ENCODE measurements at regions of chr19 and their contacts with region 1.

Region 1: GRCh38 chr19:21851596-21852345 is 15.8 kb upstream of the ZNF43 start:
- DNase-seq: peak; percentile 95
- H3K4me3 ChIP-seq: peak overlapping the region; percentile 75 to 88
- H3K27ac ChIP-seq: peak overlapping the region; percentile 81 to 82
- H3K4me1 ChIP-seq: peaks cover 0 to 12% of the 10 kb centered on the region in 2 experiments; a peak in 1 of 4 replicates
- H3K27me3 ChIP-seq: no peaks in the 10 kb centered on the region
- CTCF ChIP-seq: no peak
- EP300 ChIP-seq: no peak
- RAD21 ChIP-seq: 0 out of 2 replicates have a peak, but pooled peaks have one; percentile 13

Region 2: GRCh38 chr19:21767065-21767800 is 84.5 kb before region 1 on chr19 and contains the start of gene ZNF100:
- CTCF ChIA-PET with region 1: no interaction called
- POLR2A ChIA-PET with region 1: interaction called, 10 read pairs
- DNase-seq: peak; percentile 80
- H3K4me3 ChIP-seq: peak within 1 kb of the TSS; percentile 84 to 96
- H3K27ac ChIP-seq: peak within 1 kb of the TSS; percentile 71 to 77
- H3K4me1 ChIP-seq: no peaks in the 10 kb centered on the region; a peak in 1 of 4 replicates
- H3K27me3 ChIP-seq: no peaks in the 10 kb centered on the region
- CTCF ChIP-seq: no peak; the same call in 1 of the 2 replicates
- EP300 ChIP-seq: no peak
- RAD21 ChIP-seq: no peak
- polyA plus RNA-seq, gene ZNF100: 0.93 and 1.1 TPM in 2 replicates

Region 3: GRCh38 chr19:21835810-21836444 is 15.8 kb before region 1 on chr19 and contains the start of gene ZNF43:
- CTCF ChIA-PET with region 1: interaction called, 11 read pairs
- POLR2A ChIA-PET with region 1: interaction called, 49 read pairs
- DNase-seq: peak; percentile 79
- H3K4me3 ChIP-seq: peak within 1 kb of the TSS; percentile 69 to 90
- H3K27ac ChIP-seq: peak within 1 kb of the TSS; percentile 80 to 92
- H3K4me1 ChIP-seq: peaks cover 0 to 2% of the 10 kb centered on the region in 2 experiments; a peak in 1 of 4 replicates
- H3K27me3 ChIP-seq: no peaks in the 10 kb centered on the region
- CTCF ChIP-seq: no peak
- EP300 ChIP-seq: no peak
- RAD21 ChIP-seq: no peak
- polyA plus RNA-seq, gene ZNF43: 3.4 and 4.9 TPM in 2 replicates

Measured in SK-N-SH (cell line).